CD4-positive, alpha-beta T cell (primary cell): ENCODE measurements at regions of chr6 and their contacts with region 1.

Region 1: GRCh38 chr6:7196019-7196402 is 88.2 kb downstream of the RREB1 start:
- DNase-seq: peak in 7 of 14 experiments; percentile 9 to 47 (median 31)
- ATAC-seq: peak; percentile 92
- H3K4me3 ChIP-seq: no peak overlapping the region
- H3K4me3 Mint-ChIP-seq: peak overlapping the region; percentile 84
- H3K27ac ChIP-seq: no peak overlapping the region
- H3K27ac Mint-ChIP-seq: peak overlapping the region; percentile 91
- H3K4me1 ChIP-seq: peaks cover 8% of the 10 kb centered on the region
- H3K4me1 Mint-ChIP-seq: peaks cover 50% of the 10 kb centered on the region
- H3K27me3 ChIP-seq: no peaks in the 10 kb centered on the region
- H3K27me3 Mint-ChIP-seq: no peaks in the 10 kb centered on the region
- CTCF ChIP-seq: no peak

Region 2: DNA sequence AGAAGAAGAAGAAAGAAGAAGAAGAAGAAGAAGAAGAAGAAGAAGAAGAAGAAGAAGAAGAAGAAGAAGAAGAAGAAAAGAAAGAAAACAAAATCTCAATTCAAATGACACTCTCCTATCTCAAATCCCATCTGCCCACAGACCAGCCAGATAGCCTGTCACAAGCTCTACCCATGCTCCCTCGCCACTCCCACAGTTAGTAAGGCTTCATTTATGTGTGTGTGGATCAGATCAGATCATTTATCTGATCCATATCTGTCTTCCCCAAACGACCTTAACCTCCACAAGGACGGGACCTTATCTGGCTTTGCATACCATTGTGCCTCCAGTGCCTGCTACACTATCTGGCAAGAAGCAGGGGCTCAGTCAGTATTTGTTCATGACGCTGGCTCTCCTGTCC is 170.2 kb before region 1 on chr6:
- CTCF ChIA-PET with region 1: no interaction called
- POLR2A ChIA-PET with region 1: no interaction called
- intact Hi-C with region 1: no loop called
- DNase-seq: no peak
- ATAC-seq: no peak
- H3K4me3 ChIP-seq: no peak overlapping the region
- H3K4me3 Mint-ChIP-seq: no peak overlapping the region
- H3K27ac ChIP-seq: no peak overlapping the region
- H3K27ac Mint-ChIP-seq: no peak overlapping the region
- H3K4me1 ChIP-seq: no peaks in the 10 kb centered on the region
- H3K4me1 Mint-ChIP-seq: no peaks in the 10 kb centered on the region
- H3K27me3 ChIP-seq: peaks cover 0 to 6% of the 10 kb centered on the region in 2 experiments
- H3K27me3 Mint-ChIP-seq: peaks cover 4% of the 10 kb centered on the region
- CTCF ChIP-seq: no peak

Region 3: GRCh38 chr6:7154341-7155139 is 41.5 kb before region 1 on chr6:
- CTCF ChIA-PET with region 1: no interaction called
- POLR2A ChIA-PET with region 1: no interaction called
- intact Hi-C with region 1: loop called in 1 of 2 experiments (anchors 5 kb)
- DNase-seq: peak in 2 of 14 experiments; percentile 41
- ATAC-seq: peak; percentile 72
- H3K4me3 ChIP-seq: no peak overlapping the region
- H3K4me3 Mint-ChIP-seq: peak overlapping the region; percentile 35
- H3K27ac ChIP-seq: no peak overlapping the region
- H3K27ac Mint-ChIP-seq: peak overlapping the region; percentile 84
- H3K4me1 ChIP-seq: peaks cover 54% of the 10 kb centered on the region
- H3K4me1 Mint-ChIP-seq: peaks cover 86% of the 10 kb centered on the region
- H3K27me3 ChIP-seq: no peaks in the 10 kb centered on the region
- H3K27me3 Mint-ChIP-seq: no peaks in the 10 kb centered on the region
- CTCF ChIP-seq: no peak